ENCODE measurements at regions of chr7 and their contacts with region 1.

Region 1: DNA sequence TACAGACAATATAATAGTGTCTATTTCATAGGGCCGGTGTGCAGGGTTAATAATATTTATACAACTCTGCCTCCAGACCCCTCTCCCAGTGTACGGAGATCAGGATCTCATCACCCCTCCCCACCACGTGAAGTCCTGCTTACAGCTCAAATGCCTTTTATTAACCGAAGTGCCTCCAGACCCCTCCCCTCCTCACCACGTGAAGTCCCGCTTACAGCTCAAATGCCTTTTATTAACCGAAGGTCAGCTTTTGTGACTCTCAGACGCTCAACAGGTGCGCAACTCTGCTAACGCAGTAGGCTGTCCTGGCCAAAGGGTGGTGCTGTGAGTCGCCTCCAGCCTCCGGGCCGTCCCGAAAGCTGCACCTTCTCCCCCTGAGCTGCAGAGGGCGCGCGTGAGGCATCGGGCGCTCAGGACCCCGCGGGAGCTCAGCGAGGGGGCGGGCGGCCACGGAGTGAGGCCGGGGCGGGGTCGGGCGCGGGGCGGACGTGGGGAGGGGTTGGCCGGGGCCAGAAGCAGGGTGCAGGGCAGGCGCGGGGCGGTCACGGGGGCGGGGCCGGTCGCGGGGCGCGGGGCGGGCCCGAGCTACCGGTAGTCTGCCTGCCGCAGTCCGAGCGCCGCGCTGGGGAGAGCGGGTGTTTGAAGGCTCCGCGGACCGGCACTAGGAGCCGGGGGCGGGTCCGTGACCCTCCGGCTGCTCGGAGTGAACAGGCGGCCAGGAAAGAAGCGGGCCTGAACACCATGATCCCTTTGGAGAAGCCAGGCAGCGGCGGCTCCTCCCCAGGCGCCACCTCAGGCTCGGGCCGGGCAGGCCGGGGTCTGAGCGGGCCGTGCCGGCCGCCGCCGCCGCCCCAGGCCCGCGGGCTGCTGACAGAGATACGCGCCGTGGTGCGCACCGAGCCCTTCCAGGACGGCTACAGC is at the start of gene STK17A:
- DNase-seq: peak; percentile 82
- ATAC-seq: peak; percentile 93
- H3K4me3 ChIP-seq: peak within 1 kb of the TSS; percentile 89
- H3K27ac ChIP-seq: peak within 1 kb of the TSS; percentile 90
- H3K4me1 ChIP-seq: peaks cover 25% of the 10 kb centered on the region
- H3K27me3 ChIP-seq: peaks cover 19% of the 10 kb centered on the region
- CTCF ChIP-seq: peak; percentile 100
- total RNA-seq, gene STK17A: 21.3 TPM

Region 2: DNA sequence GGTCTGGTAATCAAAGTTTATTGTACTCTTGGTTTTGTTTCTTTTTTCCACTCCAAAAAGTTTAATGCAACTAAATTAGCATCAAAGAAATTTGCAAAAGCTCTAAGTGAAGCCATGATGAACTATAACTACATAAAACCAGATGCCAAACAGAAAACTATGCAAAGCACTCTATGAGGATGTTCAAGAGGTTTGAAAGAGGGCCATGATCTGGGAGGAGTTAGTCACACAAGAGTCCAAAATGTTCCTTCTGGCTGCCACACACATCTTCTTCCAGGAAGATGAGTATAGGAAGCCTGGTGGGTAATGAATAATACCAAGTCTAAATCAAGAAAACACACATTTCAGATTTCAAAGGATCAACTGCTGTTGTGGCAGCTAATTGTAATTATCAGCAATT is 1374.2 kb before region 1 on chr7:
- CTCF ChIA-PET with region 1: no interaction called
- POLR2A ChIA-PET with region 1: no interaction called
- in situ Hi-C with region 1: no loop called
- intact Hi-C with region 1: no loop called
- DNase-seq: no peak
- ATAC-seq: no peak
- H3K4me3 ChIP-seq: no peak overlapping the region
- H3K27ac ChIP-seq: no peak overlapping the region
- H3K4me1 ChIP-seq: no peaks in the 10 kb centered on the region
- H3K27me3 ChIP-seq: no peaks in the 10 kb centered on the region
- CTCF ChIP-seq: no peak

Region 3: DNA sequence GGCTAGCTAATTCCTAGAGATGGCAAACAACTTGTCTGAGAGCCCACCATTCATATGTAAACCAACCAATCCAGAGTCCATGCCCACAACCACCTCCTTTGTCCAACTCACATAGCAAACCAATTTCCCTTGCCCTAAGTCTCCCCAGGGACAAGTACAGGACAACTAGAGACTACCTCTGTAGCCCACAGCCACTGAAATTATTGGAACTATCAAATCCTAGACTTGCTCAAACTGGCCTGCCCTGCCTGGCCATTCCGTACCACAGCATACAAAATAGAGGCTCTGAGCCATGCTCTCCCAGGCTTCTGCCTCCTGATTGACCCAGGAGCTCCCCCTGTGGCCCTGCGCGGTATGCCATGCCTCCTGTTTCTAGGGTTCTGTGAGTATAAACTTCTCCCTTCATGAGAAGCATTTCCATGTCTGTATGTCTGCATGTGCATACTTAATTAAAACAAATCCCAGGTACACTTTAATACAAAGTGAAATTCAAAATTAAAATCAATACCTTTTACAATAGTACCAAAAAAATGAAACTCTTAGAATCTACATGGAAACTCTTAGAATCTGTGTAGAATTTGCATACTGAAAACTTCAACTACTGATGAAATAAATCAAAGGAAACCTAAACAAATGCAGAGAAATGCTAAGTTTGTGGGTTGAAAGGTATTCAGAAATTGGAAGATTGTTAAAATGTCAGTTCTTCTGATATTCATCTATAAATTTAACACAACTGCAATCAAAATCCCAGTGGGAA is 474.3 kb before region 1 on chr7:
- CTCF ChIA-PET with region 1: no interaction called
- POLR2A ChIA-PET with region 1: no interaction called
- in situ Hi-C with region 1: no loop called
- intact Hi-C with region 1: no loop called
- DNase-seq: peak; percentile 47
- ATAC-seq: peak; percentile 95
- H3K4me3 ChIP-seq: no peak overlapping the region
- H3K27ac ChIP-seq: no peak overlapping the region
- H3K4me1 ChIP-seq: no peaks in the 10 kb centered on the region
- H3K27me3 ChIP-seq: peaks cover 21% of the 10 kb centered on the region
- CTCF ChIP-seq: peak; percentile 95

Region 4: DNA sequence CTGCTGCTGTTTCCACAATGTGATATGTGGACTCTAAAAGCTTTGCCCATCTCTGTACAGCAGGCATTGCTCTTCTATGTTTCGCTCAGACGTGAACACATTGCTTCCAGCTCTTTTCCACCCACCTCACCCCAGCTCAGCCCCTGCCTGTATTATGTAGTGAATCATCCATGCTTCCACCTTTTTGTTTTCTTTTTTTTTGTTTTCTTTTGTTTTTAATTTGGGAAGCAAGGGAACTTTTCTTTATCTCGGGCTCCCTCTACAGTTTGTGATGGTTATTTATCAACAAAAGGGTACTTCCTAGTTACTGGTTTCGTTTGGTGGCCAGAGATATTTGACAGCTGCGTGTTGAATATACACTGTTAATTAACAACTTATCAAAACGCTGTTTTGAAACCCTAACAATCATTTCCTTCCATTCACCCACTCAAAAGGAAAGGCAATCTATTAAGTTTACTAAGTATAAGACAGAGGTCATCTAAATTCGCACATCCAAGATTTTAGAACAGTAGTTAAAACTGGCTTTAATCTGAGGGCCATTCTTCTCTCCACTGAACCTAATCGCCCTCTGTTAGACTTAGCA is 127.7 kb before region 1 on chr7:
- CTCF ChIA-PET with region 1: interaction called, 6 read pairs
- POLR2A ChIA-PET with region 1: interaction called, 12 read pairs
- in situ Hi-C with region 1: no loop called
- intact Hi-C with region 1: no loop called
- DNase-seq: no peak
- ATAC-seq: peak; percentile 76; the same call in 1 of the 2 replicates
- H3K4me3 ChIP-seq: no peak overlapping the region
- H3K27ac ChIP-seq: no peak overlapping the region
- H3K4me1 ChIP-seq: no peaks in the 10 kb centered on the region
- H3K27me3 ChIP-seq: peaks cover 33% of the 10 kb centered on the region
- CTCF ChIP-seq: peak; percentile 80

Region 5: DNA sequence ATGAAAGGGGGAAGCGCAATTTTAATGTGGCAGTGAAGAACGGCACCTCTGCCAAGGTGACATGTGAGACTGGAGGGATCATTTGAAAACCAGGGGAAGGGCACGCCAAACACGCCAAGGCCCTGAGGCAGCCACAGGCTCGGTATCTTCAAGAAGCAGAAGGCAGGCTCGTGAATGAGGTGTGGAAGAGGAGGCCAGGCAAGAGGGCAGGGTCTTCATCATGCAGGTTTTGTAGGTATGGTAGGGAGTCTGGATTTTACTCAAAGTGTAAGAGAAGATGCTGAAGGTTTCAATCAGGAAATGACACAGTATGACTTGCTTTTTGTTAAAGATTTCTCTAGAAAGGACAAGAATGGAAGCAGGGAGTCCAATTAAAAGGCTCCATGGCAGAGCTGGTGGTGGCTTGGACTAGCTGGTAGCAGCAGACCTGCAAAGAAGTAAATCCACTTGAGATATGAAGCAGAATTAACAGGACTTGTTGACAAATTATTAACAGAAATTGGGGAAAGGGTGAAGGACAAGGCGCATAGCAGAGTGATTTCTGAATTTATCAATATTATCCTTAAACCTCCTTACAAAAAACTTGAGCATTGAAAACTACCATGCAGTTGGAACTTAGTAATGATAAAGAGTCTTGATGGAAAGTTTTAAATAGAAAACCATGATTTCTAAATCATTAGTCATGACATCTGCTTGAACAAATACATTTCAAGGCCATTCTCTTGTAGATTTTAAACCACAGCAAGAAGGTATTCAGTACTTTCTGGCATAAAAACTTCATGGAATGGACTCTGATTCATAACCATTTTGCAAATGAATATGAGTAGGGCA is 76.2 kb after region 1 on chr7:
- CTCF ChIA-PET with region 1: interaction called, 11 read pairs
- POLR2A ChIA-PET with region 1: no interaction called
- in situ Hi-C with region 1: no loop called
- intact Hi-C with region 1: no loop called
- DNase-seq: no peak
- ATAC-seq: 0 out of 2 replicates have a peak, but pooled peaks have one; percentile 31
- H3K4me3 ChIP-seq: no peak overlapping the region
- H3K27ac ChIP-seq: no peak overlapping the region
- H3K4me1 ChIP-seq: peaks cover 10% of the 10 kb centered on the region
- H3K27me3 ChIP-seq: no peaks in the 10 kb centered on the region
- CTCF ChIP-seq: no peak

Region 6: GRCh38 chr7:43721193-43721806 is 138.5 kb after region 1 on chr7:
- CTCF ChIA-PET with region 1: interaction called, 20 read pairs
- POLR2A ChIA-PET with region 1: interaction called, 5 read pairs
- in situ Hi-C with region 1: loop called (anchors 25 kb)
- intact Hi-C with region 1: loop called (anchors 5 kb)
- DNase-seq: no peak
- ATAC-seq: no peak
- H3K4me3 ChIP-seq: no peak overlapping the region
- H3K27ac ChIP-seq: no peak overlapping the region
- H3K4me1 ChIP-seq: no peaks in the 10 kb centered on the region
- H3K27me3 ChIP-seq: no peaks in the 10 kb centered on the region
- CTCF ChIP-seq: peak; percentile 75; the same call in 1 of the 2 replicates

Region 7: GRCh38 chr7:43834463-43835251 is 251.9 kb after region 1 on chr7:
- CTCF ChIA-PET with region 1: interaction called, 29 read pairs
- POLR2A ChIA-PET with region 1: no interaction called
- in situ Hi-C with region 1: no loop called
- intact Hi-C with region 1: loop called (anchors 2 kb)
- DNase-seq: no peak
- ATAC-seq: no peak
- H3K4me3 ChIP-seq: peak overlapping the region; percentile 7 to 34; a peak in 3 of 4 replicates
- H3K27ac ChIP-seq: peak overlapping the region; percentile 71
- H3K4me1 ChIP-seq: no peaks in the 10 kb centered on the region
- H3K27me3 ChIP-seq: no peaks in the 10 kb centered on the region
- CTCF ChIP-seq: no peak